ENCODE measurements at regions of chr3 and their contacts with region 1.

Region 1: DNA sequence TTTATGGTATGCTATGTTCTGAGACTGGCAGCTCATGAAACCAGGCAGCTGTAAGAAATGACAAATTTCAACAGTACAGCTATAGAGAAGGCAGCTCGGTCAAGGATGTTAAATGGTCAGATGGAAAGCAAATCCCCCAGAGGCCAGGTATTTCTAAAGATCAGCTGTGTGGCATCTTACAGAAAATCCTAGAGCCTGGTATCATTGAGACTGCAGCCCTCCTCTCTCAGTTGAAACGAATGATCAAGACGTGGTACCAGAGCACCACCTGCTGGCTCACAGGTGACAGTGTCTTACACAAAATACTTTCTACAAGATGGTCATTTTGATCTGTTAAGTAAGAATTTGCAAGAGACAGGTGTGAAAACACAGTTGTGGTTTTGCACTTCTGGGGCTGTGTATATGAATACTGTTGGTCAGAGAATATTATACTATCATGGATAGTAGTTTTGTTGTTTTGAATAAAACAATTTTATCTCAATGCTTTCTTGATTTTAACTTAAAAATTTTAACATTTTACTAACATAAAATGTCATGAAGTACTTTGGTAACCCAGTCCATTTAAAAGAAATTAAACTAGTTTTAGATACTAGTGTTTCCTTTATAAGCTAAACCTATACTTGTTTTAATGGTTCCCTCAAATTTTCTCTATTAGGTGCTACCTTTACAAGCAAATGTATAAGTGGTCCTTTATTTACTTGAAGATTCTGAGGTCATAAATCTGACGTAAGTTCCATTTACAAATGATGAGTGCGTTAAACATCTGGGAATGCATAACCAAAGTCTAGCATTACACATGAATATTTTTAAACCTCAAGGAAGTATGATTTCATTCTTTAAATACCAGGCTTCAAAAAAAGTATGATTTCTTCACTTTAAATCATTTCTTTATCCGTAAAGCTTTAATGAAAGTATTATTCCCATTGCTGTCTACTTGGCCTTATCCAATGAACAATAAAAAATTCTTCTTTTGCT is 121.8 kb downstream of the PDZRN3 start:
- DNase-seq: peak; percentile 47 to 73 (median 66)
- H3K4me3 ChIP-seq: peak overlapping the region in 4 of 59 donors; percentile 9 to 27 (median 17)
- H3K27ac ChIP-seq: no peak overlapping the region
- H3K27me3 ChIP-seq: no peaks in the 10 kb centered on the region
- CTCF ChIP-seq: peak; percentile 72 to 98 (median 88)

Region 2: GRCh38 chr3:73080216-73080966 is 422.5 kb before region 1 on chr3:
- intact Hi-C with region 1: no loop called
- DNase-seq: no peak
- H3K4me3 ChIP-seq: no peak overlapping the region
- H3K27ac ChIP-seq: no peak overlapping the region
- H3K27me3 ChIP-seq: no peaks in the 10 kb centered on the region
- CTCF ChIP-seq: no peak

Region 3: DNA sequence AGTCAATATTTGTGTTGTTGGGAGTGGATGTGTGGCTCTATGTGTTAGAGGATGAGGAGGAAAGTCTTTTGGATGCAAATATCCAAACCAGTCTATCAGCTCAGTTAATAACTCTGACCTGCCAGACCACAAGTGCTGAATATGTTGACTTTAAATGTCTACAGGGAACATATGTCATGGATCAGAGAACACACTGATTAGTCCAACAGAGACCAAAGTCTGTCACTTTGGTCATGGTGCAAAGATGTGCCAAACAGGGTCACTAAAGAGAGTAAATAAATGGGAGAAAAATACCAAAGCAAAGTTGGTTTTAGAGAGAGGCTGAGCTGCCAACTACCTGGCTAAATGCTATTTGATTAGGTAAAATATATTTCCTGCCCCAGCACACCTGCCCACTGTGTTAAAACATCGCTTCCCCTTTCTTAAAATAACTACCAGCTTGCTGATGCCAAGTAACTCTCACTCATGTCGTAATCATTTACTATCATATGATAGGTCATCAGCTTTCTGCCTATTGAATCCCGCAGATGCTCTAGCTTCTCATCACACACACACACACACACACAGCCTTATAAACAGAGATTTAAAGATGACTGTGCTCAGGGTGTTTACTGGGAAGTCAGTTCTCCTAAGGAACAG is 51.5 kb before region 1 on chr3:
- intact Hi-C with region 1: loop called in 1 of 2 experiments (anchors 10 kb)
- DNase-seq: no peak
- H3K4me3 ChIP-seq: no peak overlapping the region
- H3K27ac ChIP-seq: peak overlapping the region in 6 of 59 donors; percentile 3 to 62 (median 27)
- H3K27me3 ChIP-seq: no peaks in the 10 kb centered on the region
- CTCF ChIP-seq: no peak

Region 4: DNA sequence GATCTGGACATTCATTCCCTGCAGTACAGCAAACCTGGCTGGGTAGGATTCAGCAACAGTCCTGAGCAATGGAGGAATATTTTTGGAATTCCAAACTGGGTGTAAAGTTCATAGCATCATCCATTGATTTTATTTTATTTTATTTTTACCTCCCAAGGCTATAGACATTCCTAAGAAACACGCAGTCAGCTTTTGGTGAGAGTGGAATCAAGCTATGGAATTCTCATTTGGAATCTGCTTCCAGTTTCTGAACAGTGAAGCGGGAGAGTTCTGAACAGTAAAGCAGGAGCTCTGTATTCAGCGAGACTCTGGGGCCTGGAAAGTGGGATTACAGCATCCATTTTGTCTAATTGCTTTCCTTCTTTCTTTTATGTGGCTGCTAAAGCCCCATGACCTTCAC is 123.2 kb after region 1 on chr3:
- intact Hi-C with region 1: no loop called
- DNase-seq: no peak
- H3K4me3 ChIP-seq: peak overlapping the region in 20 of 59 donors; percentile 59 to 77 (median 70)
- H3K27ac ChIP-seq: no peak overlapping the region
- H3K27me3 ChIP-seq: no peaks in the 10 kb centered on the region
- CTCF ChIP-seq: no peak